HepG2 (cell line): ENCODE measurements at regions of chr7 and their contacts with region 1.

Region 1: DNA sequence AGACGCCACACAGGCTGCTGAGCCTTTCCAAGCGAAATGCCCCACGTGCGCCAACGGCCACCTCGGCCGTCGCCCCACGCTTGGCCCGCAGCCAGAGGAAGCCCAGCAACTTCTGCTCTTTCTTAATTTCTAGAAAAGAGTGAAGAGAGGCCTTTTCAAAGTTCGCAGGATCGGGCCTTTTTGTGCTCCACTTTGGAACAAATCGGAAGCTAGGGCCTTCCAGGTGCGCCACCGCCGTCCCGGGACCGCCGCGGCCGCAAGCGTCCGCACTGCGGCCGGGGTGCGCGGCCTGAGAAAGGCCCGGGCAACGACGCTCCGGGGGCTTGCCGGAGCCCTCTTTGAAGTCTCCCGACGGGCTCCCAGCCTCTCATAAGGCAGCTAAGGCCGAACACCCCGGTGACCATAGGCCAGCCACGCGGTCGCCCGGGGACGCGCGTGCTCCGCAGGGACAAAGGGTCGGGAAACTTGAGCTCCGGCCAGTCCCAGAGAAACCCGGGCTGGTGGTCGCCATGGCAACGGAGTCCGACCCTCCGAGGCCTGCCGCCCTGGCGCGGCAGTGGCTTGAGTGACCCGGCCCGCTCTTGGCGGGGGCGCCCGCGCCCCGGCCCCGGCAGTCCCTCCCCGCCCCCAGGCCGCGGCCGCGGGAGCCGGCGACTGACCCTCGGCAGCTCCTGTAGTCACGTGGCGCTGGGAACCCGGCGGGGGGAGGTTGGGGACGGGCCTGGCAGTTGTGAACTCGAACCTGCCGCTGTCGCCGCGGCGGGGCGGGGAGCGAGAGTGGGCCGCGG is at the start of gene REPIN1:
- DNase-seq: peak; percentile 86
- ATAC-seq: peak; percentile 71
- H3K4me3 ChIP-seq: peak within 1 kb of the TSS; percentile 68 to 84 (median 82)
- H3K27ac ChIP-seq: peak within 1 kb of the TSS; percentile 100
- H3K4me1 ChIP-seq: peaks cover 35% of the 10 kb centered on the region
- H3K27me3 ChIP-seq: no peaks in the 10 kb centered on the region
- CTCF ChIP-seq: peak; percentile 26; the same call in 1 of the 2 replicates
- EP300 ChIP-seq: peak; percentile 43 to 49; a peak in 2 of 4 replicates
- POLR2A ChIP-seq: peak; percentile 50 to 72; a peak in 3 of 4 replicates
- RAD21 ChIP-seq: 0 out of 2 replicates have a peak, but pooled peaks have one; percentile 54
- total RNA-seq, gene REPIN1: 86.4 and 108 TPM in 2 replicates

Region 2: GRCh38 chr7:150322833-150323681 is 45.2 kb before region 1 on chr7 and contains the starts of genes ACTR3C and LRRC61:
- CTCF ChIA-PET with region 1: no interaction called
- POLR2A ChIA-PET with region 1: interaction called, 31 read pairs
- in situ Hi-C with region 1: no loop called
- intact Hi-C with region 1: no loop called
- DNase-seq: peak; percentile 74
- ATAC-seq: peak; percentile 82
- H3K4me3 ChIP-seq: peak within 1 kb of the TSS; percentile 74 to 81 (median 77)
- H3K27ac ChIP-seq: peak within 1 kb of the TSS; percentile 84
- H3K4me1 ChIP-seq: peaks cover 54% of the 10 kb centered on the region
- H3K27me3 ChIP-seq: no peaks in the 10 kb centered on the region; a peak in 1 of 5 replicates
- CTCF ChIP-seq: peak; percentile 34; the same call in 1 of the 2 replicates
- EP300 ChIP-seq: peak in 1 of 2 experiments; percentile 35; a peak in 1 of 4 replicates
- POLR2A ChIP-seq: peak; percentile 87 to 94
- RAD21 ChIP-seq: no peak; the same call in none of the 2 replicates
- total RNA-seq, gene ACTR3C: 4.1 and 7.5 TPM in 2 replicates
- total RNA-seq, gene LRRC61: 34.8 and 38.4 TPM in 2 replicates

Region 3: DNA sequence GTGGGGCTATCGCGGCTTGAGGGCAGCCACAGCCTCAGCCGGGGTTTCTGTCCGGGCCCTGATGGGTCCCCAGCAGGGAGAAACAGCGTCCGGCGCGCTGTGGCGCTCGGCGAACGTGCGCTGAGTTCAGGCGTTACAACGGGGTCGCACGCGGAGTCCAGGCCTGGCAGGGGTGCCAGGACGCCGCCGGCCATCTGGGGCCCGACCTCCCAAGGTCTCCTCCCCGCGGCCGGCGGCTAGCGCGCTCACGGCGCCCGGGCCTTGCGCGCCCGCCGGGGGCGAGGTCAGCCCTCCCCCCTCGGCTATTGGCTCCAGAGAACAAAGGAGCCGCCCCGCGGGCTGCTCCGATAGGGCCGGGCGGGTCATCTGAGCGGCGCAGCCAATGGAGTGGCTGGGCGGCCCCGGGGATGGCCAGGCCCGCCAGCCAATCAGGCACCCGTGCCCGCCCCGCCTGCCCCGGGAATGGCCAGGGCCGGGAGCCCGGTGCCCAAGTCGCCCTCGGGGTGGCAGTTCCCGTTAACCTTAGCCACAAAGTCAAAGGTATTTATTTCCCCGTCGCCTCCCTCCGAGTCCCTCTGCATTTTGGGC is 10.7 kb after region 1 on chr7 and contains the start of gene ZNF775:
- CTCF ChIA-PET with region 1: no interaction called
- POLR2A ChIA-PET with region 1: interaction called, 141 read pairs
- in situ Hi-C with region 1: no loop called
- intact Hi-C with region 1: loop called (anchors 1 kb)
- DNase-seq: peak; percentile 90
- ATAC-seq: peak; percentile 83
- H3K4me3 ChIP-seq: peak within 1 kb of the TSS; percentile 88 to 92 (median 92)
- H3K27ac ChIP-seq: peak within 1 kb of the TSS; percentile 97
- H3K4me1 ChIP-seq: peaks cover 84% of the 10 kb centered on the region
- H3K27me3 ChIP-seq: no peaks in the 10 kb centered on the region
- CTCF ChIP-seq: peak; percentile 20
- EP300 ChIP-seq: no peak
- POLR2A ChIP-seq: peak; percentile 85 to 93
- RAD21 ChIP-seq: peak; percentile 45
- total RNA-seq, gene ZNF775: 3.1 and 4.5 TPM in 2 replicates